ENCODE measurements at regions of chr14 and their contacts with region 1.

Region 1: GRCh38 chr14:50823051-50823761 is 7.8 kb downstream of the NIN start:
- DNase-seq: peak; percentile 57
- ATAC-seq: peak; percentile 31
- H3K4me3 Mint-ChIP-seq: peak overlapping the region; percentile 64
- H3K27ac Mint-ChIP-seq: peak overlapping the region; percentile 82
- H3K4me1 Mint-ChIP-seq: peaks cover 85% of the 10 kb centered on the region
- H3K27me3 Mint-ChIP-seq: no peaks in the 10 kb centered on the region

Region 2: GRCh38 chr14:49620182-49621113 is 1202.8 kb before region 1 on chr14 and contains the starts of genes MGAT2 and RPL36AL:
- CTCF ChIA-PET with region 1: no interaction called
- POLR2A ChIA-PET with region 1: no interaction called
- intact Hi-C with region 1: no loop called
- DNase-seq: peak; percentile 97
- ATAC-seq: peak; percentile 90
- H3K4me3 Mint-ChIP-seq: peak within 1 kb of the TSS; percentile 93
- H3K27ac Mint-ChIP-seq: peak within 1 kb of the TSS; percentile 97
- H3K4me1 Mint-ChIP-seq: peaks cover 51% of the 10 kb centered on the region
- H3K27me3 Mint-ChIP-seq: no peaks in the 10 kb centered on the region
- total RNA-seq, gene MGAT2: 23.8 to 32.2 TPM
- total RNA-seq, gene RPL36AL: 272 to 309 TPM

Region 3: DNA sequence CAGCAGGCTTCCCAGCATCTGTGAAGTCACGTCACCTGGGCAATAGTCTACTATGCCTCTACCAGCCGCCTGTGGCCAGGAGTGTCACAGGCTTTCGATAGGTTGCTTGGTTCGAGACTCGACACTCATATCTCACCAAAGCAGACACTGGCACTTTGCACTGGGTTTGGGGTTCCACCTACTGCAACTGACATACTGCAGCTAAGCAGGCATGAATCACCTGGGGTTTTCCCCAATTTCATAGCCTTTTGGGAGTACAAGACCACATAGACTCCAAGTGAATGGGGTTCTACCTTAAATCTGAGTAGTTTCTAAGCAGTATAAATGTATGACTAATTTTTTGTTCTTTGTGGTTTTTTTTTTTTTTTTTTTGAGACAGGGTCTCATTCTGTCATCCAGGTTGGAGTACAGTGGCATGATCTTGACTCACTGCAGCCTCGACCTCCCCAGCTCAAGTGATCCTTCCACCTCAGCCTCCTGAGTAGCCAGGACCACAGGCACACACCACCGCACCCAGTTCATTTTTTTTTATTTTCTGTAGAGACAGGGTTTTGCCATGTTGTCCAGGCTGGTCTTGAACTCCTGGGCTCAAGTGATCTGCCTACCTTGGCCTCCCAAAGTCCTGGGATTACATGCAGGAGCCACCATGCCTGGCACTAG is 479.0 kb before region 1 on chr14:
- CTCF ChIA-PET with region 1: no interaction called
- POLR2A ChIA-PET with region 1: no interaction called
- intact Hi-C with region 1: no loop called
- DNase-seq: peak; percentile 89
- ATAC-seq: peak; percentile 97
- H3K4me3 Mint-ChIP-seq: peak overlapping the region; percentile 15
- H3K27ac Mint-ChIP-seq: peak overlapping the region; percentile 60
- H3K4me1 Mint-ChIP-seq: peaks cover 30% of the 10 kb centered on the region
- H3K27me3 Mint-ChIP-seq: peaks cover 3% of the 10 kb centered on the region

Region 4: GRCh38 chr14:50736932-50737419 is 86.2 kb before region 1 on chr14:
- CTCF ChIA-PET with region 1: no interaction called
- POLR2A ChIA-PET with region 1: no interaction called
- intact Hi-C with region 1: no loop called
- DNase-seq: peak; percentile 68
- ATAC-seq: peak; percentile 95
- H3K4me3 Mint-ChIP-seq: no peak overlapping the region
- H3K27ac Mint-ChIP-seq: peak overlapping the region; percentile 51
- H3K4me1 Mint-ChIP-seq: peaks cover 43% of the 10 kb centered on the region
- H3K27me3 Mint-ChIP-seq: no peaks in the 10 kb centered on the region

Region 5: GRCh38 chr14:50785457-50786063 is 37.6 kb before region 1 on chr14:
- CTCF ChIA-PET with region 1: interaction called, 21 read pairs
- POLR2A ChIA-PET with region 1: no interaction called
- intact Hi-C with region 1: loop called (anchors 1 to 2 kb)
- DNase-seq: no peak
- ATAC-seq: no peak
- H3K4me3 Mint-ChIP-seq: no peak overlapping the region
- H3K27ac Mint-ChIP-seq: peak overlapping the region; percentile 6
- H3K4me1 Mint-ChIP-seq: peaks cover 66% of the 10 kb centered on the region
- H3K27me3 Mint-ChIP-seq: no peaks in the 10 kb centered on the region